Endothelial cell of umbilical vein (primary cell): ENCODE measurements at regions of chr1 and their contacts with region 1.

Region 1: GRCh38 chr1:180252638-180253536 is 22.8 kb downstream of the LHX4 start:
- DNase-seq: peak; percentile 57
- H3K4me3 ChIP-seq: no peak overlapping the region
- H3K27ac ChIP-seq: no peak overlapping the region
- H3K4me1 ChIP-seq: no peaks in the 10 kb centered on the region
- H3K27me3 ChIP-seq: no peaks in the 10 kb centered on the region
- CTCF ChIP-seq: peak; percentile 86 to 89
- POLR2A ChIP-seq: no peak

Region 2: DNA sequence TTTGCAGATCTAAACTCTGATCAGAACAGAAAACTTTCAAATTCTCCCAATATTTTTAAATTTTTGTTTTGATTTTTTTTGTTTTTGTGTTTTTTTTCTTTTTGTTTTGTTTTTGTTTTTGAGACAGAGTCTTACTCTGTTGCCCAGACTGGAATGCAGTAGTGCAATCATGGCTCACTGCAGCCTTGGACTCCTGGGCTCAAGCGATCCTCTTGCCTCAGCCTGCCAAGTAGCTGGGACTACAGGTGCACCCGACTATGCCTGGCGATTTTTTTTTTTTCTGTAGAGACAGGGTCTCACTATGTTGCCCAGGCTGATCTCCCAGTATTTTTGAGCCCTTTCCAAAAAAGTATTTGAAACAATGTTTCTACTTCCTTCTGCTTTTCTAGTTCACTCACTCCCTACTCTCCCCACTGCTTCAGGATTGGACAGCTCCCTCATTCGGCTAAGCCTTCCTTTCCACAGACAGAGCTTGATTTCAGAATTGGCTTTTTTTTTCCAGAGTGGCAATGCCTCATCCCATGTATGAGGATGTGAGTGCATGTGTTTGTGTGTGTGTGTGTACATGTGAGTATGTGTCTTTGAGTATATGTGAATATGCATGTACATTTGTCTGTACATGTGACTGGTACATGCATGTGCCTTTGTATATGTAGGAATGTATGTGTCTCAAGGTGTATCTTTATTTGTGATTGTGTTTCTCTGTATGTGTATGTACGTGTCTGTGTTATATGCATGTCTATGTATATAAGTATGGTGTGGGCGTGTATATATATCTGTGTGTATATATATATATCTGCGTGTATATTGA is 11.0 kb before region 1 on chr1:
- CTCF ChIA-PET with region 1: interaction called, 15 read pairs
- POLR2A ChIA-PET with region 1: no interaction called
- dilution Hi-C with region 1: no loop called
- intact Hi-C with region 1: no loop called
- DNase-seq: no peak
- H3K4me3 ChIP-seq: no peak overlapping the region
- H3K27ac ChIP-seq: no peak overlapping the region
- H3K4me1 ChIP-seq: no peaks in the 10 kb centered on the region
- H3K27me3 ChIP-seq: peaks cover 47 to 53% of the 10 kb centered on the region in 2 experiments
- CTCF ChIP-seq: no peak
- POLR2A ChIP-seq: no peak

Region 3: DNA sequence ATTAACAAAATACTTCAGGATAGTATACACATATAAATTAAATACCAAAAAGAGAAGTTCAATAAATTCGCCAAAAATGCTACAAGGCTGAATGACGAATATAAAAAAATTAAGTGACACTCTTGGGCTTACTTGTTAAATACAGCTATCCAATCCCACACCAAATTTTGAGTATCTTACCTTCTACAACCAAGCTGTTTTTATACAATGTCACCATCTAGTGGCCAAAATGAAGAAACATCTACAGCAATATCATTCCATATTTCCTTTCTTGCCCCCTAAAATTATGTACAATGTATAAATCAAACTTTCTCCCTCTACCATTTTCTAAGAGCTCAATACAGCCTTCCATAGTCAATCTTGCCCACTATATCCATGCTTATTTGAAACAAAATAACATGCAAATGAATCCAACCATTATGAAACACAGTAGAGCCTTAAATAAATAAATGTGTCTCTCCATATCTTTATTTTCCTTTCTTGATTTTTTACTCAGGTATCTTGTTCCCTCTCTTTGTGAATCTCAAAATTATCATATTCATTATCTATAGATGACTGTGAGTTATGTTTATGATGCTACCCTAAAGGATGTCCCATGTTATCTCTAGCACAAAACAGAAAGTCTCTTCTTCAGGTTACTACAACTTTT is 163.2 kb after region 1 on chr1:
- CTCF ChIA-PET with region 1: interaction called, 121 read pairs
- POLR2A ChIA-PET with region 1: no interaction called
- dilution Hi-C with region 1: no loop called
- intact Hi-C with region 1: loop called (anchors 1 kb)
- DNase-seq: peak; percentile 41
- H3K4me3 ChIP-seq: no peak overlapping the region
- H3K27ac ChIP-seq: no peak overlapping the region
- H3K4me1 ChIP-seq: no peaks in the 10 kb centered on the region
- H3K27me3 ChIP-seq: no peaks in the 10 kb centered on the region
- CTCF ChIP-seq: peak; percentile 27 to 39
- POLR2A ChIP-seq: no peak

Region 4: GRCh38 chr1:180468311-180468710 is 215.4 kb after region 1 on chr1:
- CTCF ChIA-PET with region 1: interaction called, 12 read pairs
- POLR2A ChIA-PET with region 1: no interaction called
- dilution Hi-C with region 1: no loop called
- intact Hi-C with region 1: no loop called
- DNase-seq: no peak
- H3K4me3 ChIP-seq: no peak overlapping the region
- H3K27ac ChIP-seq: no peak overlapping the region
- H3K4me1 ChIP-seq: no peaks in the 10 kb centered on the region
- H3K27me3 ChIP-seq: no peaks in the 10 kb centered on the region
- CTCF ChIP-seq: no peak
- POLR2A ChIP-seq: no peak